Activated naive CD4-positive, alpha-beta T cell treated with anti-CD3 and anti-CD28 coated beads for 36 hours (primary cell): ENCODE measurements at regions of chr1 and their contacts with region 1.

Region 1: GRCh38 chr1:207751790-207752455 is at the start of gene CD46:
- DNase-seq: peak; percentile 97
- H3K4me3 Mint-ChIP-seq: peak within 1 kb of the TSS; percentile 92
- H3K27ac Mint-ChIP-seq: peak within 1 kb of the TSS; percentile 98
- H3K4me1 Mint-ChIP-seq: peaks cover 59% of the 10 kb centered on the region
- H3K27me3 Mint-ChIP-seq: no peaks in the 10 kb centered on the region
- total RNA-seq, gene CD46: 91.0 to 93.4 TPM

Region 2: DNA sequence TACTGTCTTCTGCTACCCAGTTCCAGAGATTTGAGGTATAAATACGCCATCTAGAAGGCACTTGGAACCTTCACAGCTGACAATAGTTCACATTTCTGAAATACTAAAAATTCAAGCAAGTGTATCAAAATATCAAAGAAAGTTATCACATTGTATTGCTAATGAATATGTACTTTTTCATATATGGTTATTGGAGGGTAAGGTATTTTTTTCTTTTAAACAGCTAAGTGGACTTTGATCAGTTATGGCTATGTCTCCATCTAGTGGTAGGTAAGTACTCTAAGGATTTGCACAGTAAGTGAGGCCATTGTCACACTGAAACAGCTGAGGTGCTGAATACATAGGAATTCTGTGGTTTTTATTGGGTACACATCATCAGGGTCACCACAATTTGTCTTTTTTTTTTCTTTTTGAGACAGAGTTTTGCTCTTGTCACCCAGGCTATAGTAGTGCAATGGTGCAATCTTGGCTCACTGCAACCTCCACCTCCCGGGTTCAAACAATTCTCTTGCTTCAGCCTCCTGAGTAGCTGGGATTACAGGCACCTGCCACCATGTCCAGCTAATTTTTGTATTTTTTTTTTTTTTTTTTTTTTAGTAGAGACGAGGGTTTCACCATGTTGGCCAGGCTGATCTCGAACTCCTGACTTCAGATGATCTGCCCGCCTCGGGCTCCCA is 346.9 kb before region 1 on chr1:
- CTCF ChIA-PET with region 1: no interaction called
- intact Hi-C with region 1: no loop called
- DNase-seq: no peak
- H3K4me3 Mint-ChIP-seq: no peak overlapping the region
- H3K27ac Mint-ChIP-seq: no peak overlapping the region
- H3K4me1 Mint-ChIP-seq: peaks cover 13% of the 10 kb centered on the region
- H3K27me3 Mint-ChIP-seq: no peaks in the 10 kb centered on the region

Region 3: GRCh38 chr1:207719234-207719633 is 32.7 kb before region 1 on chr1:
- CTCF ChIA-PET with region 1: no interaction called
- intact Hi-C with region 1: no loop called
- DNase-seq: no peak
- H3K4me3 Mint-ChIP-seq: no peak overlapping the region
- H3K27ac Mint-ChIP-seq: no peak overlapping the region
- H3K4me1 Mint-ChIP-seq: no peaks in the 10 kb centered on the region
- H3K27me3 Mint-ChIP-seq: no peaks in the 10 kb centered on the region

Region 4: GRCh38 chr1:207876131-207876530 is 124.2 kb after region 1 on chr1:
- CTCF ChIA-PET with region 1: no interaction called
- intact Hi-C with region 1: loop called (anchors 2 kb)
- DNase-seq: peak; percentile 23
- H3K4me3 Mint-ChIP-seq: no peak overlapping the region
- H3K27ac Mint-ChIP-seq: no peak overlapping the region
- H3K4me1 Mint-ChIP-seq: peaks cover 60% of the 10 kb centered on the region
- H3K27me3 Mint-ChIP-seq: no peaks in the 10 kb centered on the region

Region 5: GRCh38 chr1:207941665-207942064 is 189.7 kb after region 1 on chr1:
- CTCF ChIA-PET with region 1: no interaction called
- intact Hi-C with region 1: no loop called
- DNase-seq: no peak
- H3K4me3 Mint-ChIP-seq: no peak overlapping the region
- H3K27ac Mint-ChIP-seq: no peak overlapping the region
- H3K4me1 Mint-ChIP-seq: no peaks in the 10 kb centered on the region
- H3K27me3 Mint-ChIP-seq: peaks cover 12% of the 10 kb centered on the region